ENCODE measurements at regions of chr16 and their contacts with region 1.

Region 1: DNA sequence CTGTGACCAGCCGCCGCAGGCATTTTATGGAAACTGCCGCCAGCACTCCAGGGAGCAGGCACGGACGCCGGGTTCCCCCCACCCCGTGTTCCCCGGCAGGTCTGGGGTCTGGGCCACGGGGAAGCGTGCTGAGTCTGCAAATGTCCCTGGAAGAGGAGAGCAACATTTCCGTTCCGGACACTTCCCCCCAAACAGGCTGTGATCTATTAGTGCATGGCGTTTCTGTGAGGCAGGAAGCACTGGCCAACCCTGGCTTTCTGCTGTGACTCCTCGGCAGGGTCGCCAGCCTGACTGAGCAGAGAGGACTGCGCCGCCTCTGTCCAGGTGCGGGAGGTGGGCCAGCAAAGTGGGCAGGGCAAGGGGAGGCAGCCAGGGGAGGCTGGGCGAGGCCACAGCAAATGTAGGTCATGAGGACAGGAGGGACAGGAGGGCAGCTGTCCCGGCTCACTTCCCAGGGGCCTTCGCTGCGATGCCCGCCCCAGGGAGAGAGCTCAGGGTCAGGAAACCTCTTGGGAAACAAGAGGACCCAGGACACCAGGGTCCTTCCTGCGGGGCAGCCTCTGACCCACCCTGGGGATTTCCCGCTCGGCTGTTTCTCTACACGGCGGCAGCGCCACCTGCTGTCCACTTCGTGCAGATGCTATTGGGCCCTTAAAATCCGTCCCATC is 9.5 kb downstream of the FOXF1 start:
- H3K4me3 ChIP-seq: no peak overlapping the region
- H3K27ac ChIP-seq: no peak overlapping the region
- H3K4me1 ChIP-seq: no peaks in the 10 kb centered on the region
- CTCF ChIP-seq: peak; percentile 79

Region 2: GRCh38 chr16:86044241-86044671 is 475.5 kb before region 1 on chr16:
- CTCF ChIA-PET with region 1: interaction called, 13 read pairs
- POLR2A ChIA-PET with region 1: no interaction called
- H3K4me3 ChIP-seq: no peak overlapping the region
- H3K27ac ChIP-seq: no peak overlapping the region
- H3K4me1 ChIP-seq: no peaks in the 10 kb centered on the region
- CTCF ChIP-seq: peak; percentile 76

Region 3: DNA sequence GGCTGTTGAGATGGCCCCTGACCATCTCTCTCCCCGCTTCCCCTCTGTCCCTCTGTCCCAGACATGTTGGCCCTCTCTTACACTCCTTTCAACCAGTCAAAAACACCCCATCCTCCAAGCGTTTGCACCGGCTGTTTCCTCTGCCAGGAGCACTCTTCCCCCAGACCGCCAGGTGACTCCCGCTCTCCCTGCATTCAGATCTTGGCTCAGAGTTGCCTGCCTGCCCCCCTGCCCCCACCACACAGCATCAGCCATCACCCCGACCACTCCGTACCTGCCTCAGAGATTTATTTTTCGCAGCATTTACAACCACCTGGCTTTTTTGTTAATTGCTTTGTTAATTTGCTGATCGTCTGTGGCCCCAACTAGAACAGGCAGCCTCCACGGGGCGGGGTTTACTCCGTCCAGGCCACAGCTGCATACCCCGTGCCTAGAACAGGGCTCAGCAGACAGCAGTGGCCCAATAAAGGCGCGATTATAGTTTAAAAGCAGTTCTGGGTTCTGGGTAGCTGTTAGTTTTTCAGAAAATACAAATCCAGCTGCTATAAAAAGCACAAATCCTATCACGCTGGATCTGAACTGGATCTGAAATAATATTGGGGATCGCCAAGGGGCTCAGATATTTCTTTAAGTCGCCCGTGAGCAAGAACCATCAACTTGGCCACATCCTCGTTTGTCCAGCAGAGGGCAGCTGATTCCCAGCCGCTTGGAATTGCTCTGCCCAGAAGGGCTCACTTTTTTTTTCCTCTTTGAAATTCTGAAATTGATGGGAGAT is 447.3 kb before region 1 on chr16:
- CTCF ChIA-PET with region 1: interaction called, 64 read pairs
- POLR2A ChIA-PET with region 1: interaction called, 5 read pairs
- H3K4me3 ChIP-seq: no peak overlapping the region
- H3K27ac ChIP-seq: no peak overlapping the region
- H3K4me1 ChIP-seq: no peaks in the 10 kb centered on the region
- CTCF ChIP-seq: no peak

Region 4: GRCh38 chr16:86252596-86252995 is 267.2 kb before region 1 on chr16:
- CTCF ChIA-PET with region 1: interaction called, 135 read pairs
- POLR2A ChIA-PET with region 1: interaction called, 15 read pairs
- H3K4me3 ChIP-seq: no peak overlapping the region
- H3K27ac ChIP-seq: no peak overlapping the region
- H3K4me1 ChIP-seq: no peaks in the 10 kb centered on the region
- CTCF ChIP-seq: peak; percentile 41; the same call in 1 of the 2 replicates

Region 5: DNA sequence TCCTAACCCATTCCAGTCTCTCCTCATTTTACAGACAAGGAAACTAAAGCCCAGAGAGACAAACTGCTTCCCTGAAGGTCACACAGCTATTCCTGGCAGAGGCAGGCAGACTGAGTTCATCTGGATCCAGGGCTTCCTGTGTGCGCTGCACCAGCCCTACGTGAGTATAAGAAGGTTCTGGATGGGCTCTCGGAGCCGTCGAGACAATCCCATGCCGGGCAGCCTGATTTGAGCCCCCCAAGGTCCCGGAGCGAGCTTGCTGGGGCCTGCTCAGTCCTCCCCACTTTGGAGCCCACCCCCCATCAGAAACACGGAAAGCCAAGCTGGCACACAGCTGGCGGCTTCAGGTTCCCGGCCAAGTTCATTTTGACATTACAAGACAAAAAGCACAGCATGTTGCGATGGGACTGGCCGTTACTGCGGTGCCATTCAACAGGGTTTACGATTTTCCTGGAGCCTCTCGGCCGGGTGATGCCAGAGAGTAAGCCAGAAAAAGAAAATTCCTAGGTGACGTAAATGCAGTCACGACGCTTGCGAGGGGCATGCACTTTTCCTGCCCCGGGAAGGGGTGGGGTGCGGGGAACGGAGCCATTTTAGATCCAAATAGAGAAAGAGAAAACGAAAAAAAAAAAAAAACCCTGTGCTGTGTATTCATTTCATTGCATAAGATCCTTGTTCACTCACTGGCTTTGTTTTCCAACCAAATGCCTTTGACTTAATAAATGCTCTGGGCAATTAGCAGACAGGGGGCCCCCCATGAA is 176.6 kb before region 1 on chr16:
- CTCF ChIA-PET with region 1: interaction called, 38 read pairs
- POLR2A ChIA-PET with region 1: interaction called, 7 read pairs
- H3K4me3 ChIP-seq: no peak overlapping the region
- H3K27ac ChIP-seq: no peak overlapping the region
- H3K4me1 ChIP-seq: peaks cover 6% of the 10 kb centered on the region
- CTCF ChIP-seq: no peak

Region 6: GRCh38 chr16:86428729-86429517 is 90.9 kb before region 1 on chr16:
- CTCF ChIA-PET with region 1: interaction called, 10 read pairs
- POLR2A ChIA-PET with region 1: no interaction called
- H3K4me3 ChIP-seq: no peak overlapping the region
- H3K27ac ChIP-seq: no peak overlapping the region
- H3K4me1 ChIP-seq: no peaks in the 10 kb centered on the region
- CTCF ChIP-seq: no peak

Region 7: DNA sequence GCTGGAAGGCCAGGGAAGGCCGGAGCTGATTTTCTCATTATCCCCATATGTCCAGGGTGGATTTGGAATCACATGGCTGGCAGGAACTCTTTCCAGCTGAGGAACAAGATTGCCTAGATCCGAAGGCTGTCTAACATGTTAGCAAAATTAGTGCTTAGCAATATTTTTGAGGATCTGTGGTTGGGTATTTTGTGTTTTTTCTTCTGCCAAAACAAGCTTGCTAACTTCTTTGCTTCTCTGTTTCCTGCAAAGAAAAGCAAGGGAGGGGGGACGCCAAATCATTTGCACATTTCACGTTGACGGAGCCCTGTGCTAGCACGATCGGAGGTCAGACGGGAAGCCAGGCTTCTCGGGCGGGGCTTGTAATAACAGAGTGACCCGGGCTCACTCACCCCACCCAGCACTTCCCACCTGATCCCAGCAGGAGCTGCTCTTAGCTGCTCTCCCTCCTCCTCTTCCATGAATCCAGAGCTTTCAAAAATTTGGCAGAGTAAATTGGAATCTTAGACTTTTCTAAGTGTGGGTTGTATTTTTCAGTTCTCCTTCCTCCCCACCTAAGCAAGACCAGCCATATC is 42.7 kb before region 1 on chr16:
- CTCF ChIA-PET with region 1: interaction called, 13 read pairs
- POLR2A ChIA-PET with region 1: no interaction called
- H3K4me3 ChIP-seq: no peak overlapping the region
- H3K27ac ChIP-seq: no peak overlapping the region
- H3K4me1 ChIP-seq: no peaks in the 10 kb centered on the region
- CTCF ChIP-seq: no peak